ENCODE measurements at regions of chr9 and their contacts with region 1.

Region 1: GRCh38 chr9:76944011-76944410 is 38.1 kb upstream of the PRUNE2 start:
- DNase-seq: no peak
- H3K4me3 ChIP-seq: no peak overlapping the region
- H3K27ac ChIP-seq: no peak overlapping the region
- H3K4me1 ChIP-seq: no peaks in the 10 kb centered on the region
- H3K27me3 ChIP-seq: no peaks in the 10 kb centered on the region
- CTCF ChIP-seq: no peak
- POLR2A ChIP-seq: no peak

Region 2: DNA sequence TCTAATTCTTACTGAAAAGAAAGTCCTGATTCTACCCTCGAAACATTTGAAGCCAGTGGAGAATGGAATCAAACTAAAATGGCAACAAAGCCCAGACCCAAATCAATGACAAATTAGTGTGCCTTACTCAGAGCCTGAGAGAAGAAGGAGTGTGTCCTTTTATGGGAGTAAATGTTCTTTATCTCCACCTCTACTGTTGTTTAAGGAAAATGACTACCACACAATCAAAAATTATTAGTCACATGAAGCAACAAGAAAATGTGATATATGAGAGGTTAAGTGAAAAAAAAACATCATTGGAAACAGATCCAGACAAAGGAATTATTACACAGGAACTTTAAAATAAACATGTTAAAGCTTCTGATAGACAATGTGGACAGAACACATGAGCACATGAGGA is 25.7 kb after region 1 on chr9:
- intact Hi-C with region 1: loop called (anchors 2 kb)
- DNase-seq: no peak
- H3K4me3 ChIP-seq: no peak overlapping the region
- H3K27ac ChIP-seq: no peak overlapping the region
- H3K4me1 ChIP-seq: no peaks in the 10 kb centered on the region
- H3K27me3 ChIP-seq: no peaks in the 10 kb centered on the region
- CTCF ChIP-seq: no peak
- POLR2A ChIP-seq: no peak

Region 3: DNA sequence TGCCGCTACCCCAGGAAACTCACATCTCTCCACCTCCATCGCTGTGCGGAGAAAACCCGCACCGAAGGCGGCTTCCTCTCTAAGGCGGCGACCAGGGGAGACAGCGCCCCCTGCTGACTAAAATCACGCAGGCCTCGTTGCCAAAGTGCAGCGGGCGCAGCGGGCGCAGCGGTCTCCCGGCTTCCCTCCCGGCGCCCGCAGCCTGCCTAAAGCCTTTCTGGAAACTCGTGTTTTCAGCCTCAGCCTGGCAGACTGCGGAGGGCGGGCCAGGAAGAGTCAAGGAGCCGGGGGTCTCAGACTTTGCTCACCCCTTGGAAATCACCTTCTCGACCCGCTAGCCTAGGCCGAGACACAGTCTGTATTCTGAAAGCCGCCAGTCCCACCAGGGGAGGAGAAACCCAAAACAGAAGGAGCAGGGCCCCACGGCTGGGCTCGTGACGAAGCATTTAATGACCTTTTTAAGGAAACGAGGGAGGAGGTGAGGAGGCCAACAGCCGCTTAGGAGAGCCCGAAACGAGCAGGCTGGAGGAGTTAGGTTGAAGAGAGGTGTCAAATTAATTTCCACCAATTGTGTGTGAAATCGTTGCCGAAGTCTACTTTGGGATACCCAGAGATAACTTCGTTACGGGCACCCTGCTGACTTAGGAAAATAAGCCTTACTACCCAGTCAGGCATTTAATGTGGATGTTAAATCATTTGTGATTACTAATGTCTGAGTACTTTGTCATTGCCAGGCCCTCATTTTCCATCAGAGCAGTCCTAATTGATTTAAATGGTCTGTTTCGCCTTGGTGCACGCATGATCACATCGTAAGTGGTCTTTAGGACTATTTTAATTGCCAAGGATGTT is 68.2 kb after region 1 on chr9:
- intact Hi-C with region 1: no loop called
- DNase-seq: no peak
- H3K4me3 ChIP-seq: peak overlapping the region in 1 of 2 donors; percentile 6
- H3K27ac ChIP-seq: no peak overlapping the region
- H3K4me1 ChIP-seq: peaks cover 19% of the 10 kb centered on the region
- H3K27me3 ChIP-seq: peaks cover 19% of the 10 kb centered on the region
- CTCF ChIP-seq: peak in 2 of 3 experiments; percentile 43 to 48
- POLR2A ChIP-seq: no peak